IMR-90 (cell line): ENCODE measurements at regions of chr3 and their contacts with region 1.

Region 1: DNA sequence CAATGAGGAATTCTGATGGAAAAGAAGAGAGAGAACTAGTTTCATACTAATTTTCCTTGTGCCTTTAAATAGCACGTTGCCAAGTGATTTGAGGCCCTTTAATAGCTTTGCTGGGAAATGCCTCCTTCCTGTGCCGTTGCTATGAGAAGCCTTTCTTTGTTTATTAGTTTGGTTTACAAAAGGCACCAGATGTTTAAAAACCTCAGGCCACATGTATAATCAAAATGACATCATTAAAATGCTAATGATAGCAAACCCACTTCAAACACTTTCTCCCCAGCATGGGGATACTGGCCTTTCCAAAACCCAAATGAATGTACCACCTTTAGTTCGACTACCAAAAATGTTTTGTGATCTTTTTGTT is 50.0 kb upstream of the TBC1D23 start:
- DNase-seq: peak; percentile 95
- ATAC-seq: peak; percentile 74
- H3K4me3 ChIP-seq: no peak overlapping the region
- H3K27ac ChIP-seq: peak overlapping the region; percentile 86; the same call in 1 of the 2 replicates
- H3K4me1 ChIP-seq: peaks cover 18% of the 10 kb centered on the region
- H3K27me3 ChIP-seq: no peaks in the 10 kb centered on the region; the same call in 1 of the 2 replicates
- CTCF ChIP-seq: no peak
- POLR2A ChIP-seq: no peak
- RAD21 ChIP-seq: no peak

Region 2: GRCh38 chr3:100159331-100160153 is 51.2 kb before region 1 on chr3:
- CTCF ChIA-PET with region 1: no interaction called
- POLR2A ChIA-PET with region 1: no interaction called
- dilution Hi-C with region 1: no loop called
- in situ Hi-C with region 1: no loop called
- intact Hi-C with region 1: loop called (anchors 2 kb)
- DNase-seq: peak; percentile 84
- ATAC-seq: peak; percentile 83
- H3K4me3 ChIP-seq: no peak overlapping the region
- H3K27ac ChIP-seq: peak overlapping the region; percentile 69; the same call in 1 of the 2 replicates
- H3K4me1 ChIP-seq: peaks cover 5% of the 10 kb centered on the region
- H3K27me3 ChIP-seq: no peaks in the 10 kb centered on the region
- CTCF ChIP-seq: no peak
- POLR2A ChIP-seq: no peak
- RAD21 ChIP-seq: no peak

Region 3: DNA sequence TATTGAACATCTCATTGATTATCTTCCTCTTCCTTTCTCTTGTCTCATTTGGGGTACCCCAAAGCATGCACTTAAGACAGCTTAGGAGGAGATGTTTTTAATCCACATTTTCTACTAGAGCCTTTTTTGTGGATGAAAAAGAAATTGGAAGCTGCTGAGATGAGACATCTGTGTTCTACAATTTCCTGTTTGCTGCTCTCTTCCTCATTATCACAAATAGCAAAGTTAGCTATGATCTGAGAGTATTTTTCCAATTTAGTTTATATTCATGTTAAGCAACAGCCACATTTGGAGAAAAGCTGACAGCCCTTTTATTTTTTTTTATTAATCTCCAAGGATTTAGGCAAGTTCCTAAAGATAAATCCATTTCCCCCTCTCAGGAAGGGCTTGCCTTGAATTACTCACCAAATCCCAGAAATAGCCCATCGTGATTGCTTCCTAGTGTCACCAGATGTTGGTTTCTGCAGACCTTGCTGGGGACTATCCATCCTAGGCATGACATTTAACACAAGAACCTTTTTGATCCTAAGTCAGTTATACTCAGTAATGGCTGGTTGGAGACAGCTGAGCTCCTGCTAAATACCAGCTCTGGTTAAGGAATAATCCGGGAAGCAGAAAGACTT is 25.7 kb before region 1 on chr3:
- CTCF ChIA-PET with region 1: no interaction called
- POLR2A ChIA-PET with region 1: no interaction called
- dilution Hi-C with region 1: no loop called
- in situ Hi-C with region 1: no loop called
- intact Hi-C with region 1: no loop called
- DNase-seq: no peak
- ATAC-seq: 0 out of 2 replicates have a peak, but pooled peaks have one; percentile 14
- H3K4me3 ChIP-seq: no peak overlapping the region
- H3K27ac ChIP-seq: no peak overlapping the region; the same call in 1 of the 2 replicates
- H3K4me1 ChIP-seq: peaks cover 4% of the 10 kb centered on the region
- H3K27me3 ChIP-seq: no peaks in the 10 kb centered on the region; the same call in 1 of the 2 replicates
- CTCF ChIP-seq: no peak
- POLR2A ChIP-seq: no peak
- RAD21 ChIP-seq: no peak

Region 4: DNA sequence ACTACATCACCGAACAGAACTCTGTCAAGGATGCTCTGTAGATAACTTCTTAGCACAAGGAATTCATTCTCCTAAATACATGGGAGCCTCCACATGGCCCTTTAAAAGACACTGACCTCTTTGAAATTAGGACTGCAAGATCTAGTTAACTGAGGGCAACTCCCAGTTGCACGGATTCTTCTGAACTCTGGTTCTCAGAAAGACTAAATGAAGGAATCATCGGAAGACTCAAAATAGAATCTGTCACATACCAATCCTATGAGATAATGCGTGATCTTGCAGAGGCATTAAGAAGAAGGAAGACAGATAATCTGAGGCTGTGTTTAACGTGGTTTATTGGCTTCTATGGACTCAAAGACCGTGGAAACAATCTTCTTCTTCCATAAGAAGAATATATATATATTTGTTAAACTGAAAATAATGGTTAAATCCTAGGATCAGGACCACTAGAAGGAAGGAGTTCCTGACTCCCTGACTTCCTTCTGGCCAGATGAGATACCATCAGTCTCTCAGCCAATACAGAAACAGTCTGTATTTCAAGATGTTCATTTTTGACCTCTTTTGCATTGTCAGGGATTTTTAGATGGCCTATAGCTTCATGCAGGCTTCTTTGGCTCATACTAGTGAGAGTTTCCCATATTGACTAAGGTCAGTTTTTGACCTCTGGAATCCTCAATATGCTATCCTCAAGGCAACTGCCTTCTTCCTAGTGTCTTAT is 16.1 kb after region 1 on chr3:
- CTCF ChIA-PET with region 1: no interaction called
- POLR2A ChIA-PET with region 1: no interaction called
- dilution Hi-C with region 1: no loop called
- in situ Hi-C with region 1: no loop called
- intact Hi-C with region 1: no loop called
- DNase-seq: peak; percentile 68
- ATAC-seq: peak; percentile 53
- H3K4me3 ChIP-seq: no peak overlapping the region
- H3K27ac ChIP-seq: no peak overlapping the region
- H3K4me1 ChIP-seq: peaks cover 10% of the 10 kb centered on the region; the same call in 1 of the 2 replicates
- H3K27me3 ChIP-seq: no peaks in the 10 kb centered on the region
- CTCF ChIP-seq: no peak
- POLR2A ChIP-seq: no peak
- RAD21 ChIP-seq: no peak